ENCODE measurements at regions of chr1 and their contacts with region 1.

Region 1: GRCh38 chr1:196584703-196585102 is 23.5 kb downstream of the KCNT2 start:
- DNase-seq: no peak

Region 2: GRCh38 chr1:196425513-196425912 is 159.2 kb before region 1 on chr1:
- CTCF ChIA-PET with region 1: no interaction called
- POLR2A ChIA-PET with region 1: no interaction called
- DNase-seq: no peak

Region 3: GRCh38 chr1:196558424-196558823 is 26.3 kb before region 1 on chr1:
- CTCF ChIA-PET with region 1: no interaction called
- POLR2A ChIA-PET with region 1: no interaction called
- DNase-seq: no peak

Region 4: DNA sequence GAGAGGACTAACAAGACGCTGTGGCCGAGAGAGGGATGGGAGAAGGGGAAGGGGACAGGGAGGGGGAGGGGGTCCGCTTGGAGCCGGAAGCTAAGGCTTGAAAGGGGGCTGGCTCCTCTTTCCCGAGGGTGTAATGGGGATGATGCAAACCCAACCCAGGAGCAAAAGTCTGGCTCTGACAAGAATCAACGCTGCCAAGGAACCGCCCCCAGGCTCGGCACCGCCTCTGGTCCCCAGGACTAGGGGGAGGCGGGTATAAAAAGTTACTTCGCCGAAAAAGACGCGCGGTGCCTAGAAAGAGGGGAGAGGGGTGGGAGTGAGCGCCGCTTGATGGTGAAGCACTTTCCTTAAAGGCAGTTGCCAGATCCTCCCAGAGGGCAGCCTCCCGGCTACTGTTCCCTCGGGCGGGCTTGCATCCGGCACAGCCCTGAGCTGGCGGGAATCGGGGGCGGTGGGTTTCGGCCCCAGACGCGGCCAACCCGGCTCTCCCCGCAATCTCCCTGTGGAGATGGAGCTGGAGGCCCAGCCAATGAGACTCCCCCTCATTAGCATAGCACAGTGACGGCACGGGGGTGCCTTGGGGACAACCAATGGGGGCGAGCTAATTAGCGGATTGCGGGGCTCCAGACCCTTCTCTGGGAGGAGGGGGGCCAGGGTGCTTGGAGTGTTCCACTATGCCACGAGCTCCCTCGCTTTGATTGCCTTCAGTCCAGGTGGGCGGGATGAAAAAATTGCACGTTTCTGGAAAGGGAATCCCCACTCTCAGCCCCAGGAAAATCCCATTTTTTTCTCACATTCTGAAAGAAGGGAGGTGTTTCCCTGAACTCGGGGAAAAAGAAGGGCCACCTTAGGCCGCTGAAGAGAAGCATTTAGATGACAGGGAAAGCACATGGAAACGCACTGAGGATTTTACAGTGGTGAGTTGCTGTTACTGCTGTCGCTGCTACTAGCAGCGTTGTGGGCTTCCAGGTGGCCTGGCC is 24.0 kb after region 1 on chr1 and contains the start of gene KCNT2:
- CTCF ChIA-PET with region 1: interaction called, 3 read pairs
- POLR2A ChIA-PET with region 1: interaction called, 10 read pairs
- DNase-seq: peak; percentile 79

Measured in HEK293T (cell line).